ENCODE measurements at regions of chr7 and their contacts with region 1.

Region 1: GRCh38 chr7:82729172-82730030 is 285.8 kb upstream of the CACNA2D1 start:
- DNase-seq: peak; percentile 18
- CTCF ChIP-seq: peak; percentile 59

Region 2: DNA sequence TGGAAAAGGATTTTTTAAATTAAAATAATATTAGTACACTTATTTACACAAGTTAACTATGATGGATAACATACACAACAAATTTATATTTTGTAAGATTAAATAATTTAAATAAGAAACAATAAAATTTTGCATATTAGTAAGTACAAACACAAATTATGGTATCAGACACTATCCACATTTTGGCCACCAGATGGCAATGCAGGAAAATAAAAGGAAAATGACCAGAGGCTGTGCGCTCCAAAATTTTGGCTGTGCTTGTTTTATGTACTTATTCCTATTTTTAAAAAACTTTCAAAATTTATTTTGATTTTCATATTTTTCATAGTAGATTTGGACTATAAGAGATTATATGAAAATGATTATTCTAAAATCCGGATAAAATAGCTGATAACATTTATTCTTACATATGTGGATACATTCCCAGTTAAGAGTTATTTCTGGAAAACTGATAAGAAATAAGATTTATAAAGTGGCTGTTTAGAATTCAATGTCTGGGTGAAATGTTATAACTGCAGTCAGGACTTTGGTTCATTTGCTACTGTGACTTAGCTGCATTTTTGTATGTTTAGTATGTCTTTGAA is 684.8 kb before region 1 on chr7:
- CTCF ChIA-PET with region 1: interaction called, 10 read pairs
- POLR2A ChIA-PET with region 1: no interaction called
- DNase-seq: no peak
- CTCF ChIP-seq: peak; percentile 48

Region 3: GRCh38 chr7:82694022-82694421 is 35.4 kb before region 1 on chr7:
- CTCF ChIA-PET with region 1: no interaction called
- POLR2A ChIA-PET with region 1: no interaction called
- DNase-seq: no peak
- CTCF ChIP-seq: no peak

Measured in GM10248 (cell line).